BJ (cell line): ENCODE measurements at regions of chr19 and their contacts with region 1.

Region 1: DNA sequence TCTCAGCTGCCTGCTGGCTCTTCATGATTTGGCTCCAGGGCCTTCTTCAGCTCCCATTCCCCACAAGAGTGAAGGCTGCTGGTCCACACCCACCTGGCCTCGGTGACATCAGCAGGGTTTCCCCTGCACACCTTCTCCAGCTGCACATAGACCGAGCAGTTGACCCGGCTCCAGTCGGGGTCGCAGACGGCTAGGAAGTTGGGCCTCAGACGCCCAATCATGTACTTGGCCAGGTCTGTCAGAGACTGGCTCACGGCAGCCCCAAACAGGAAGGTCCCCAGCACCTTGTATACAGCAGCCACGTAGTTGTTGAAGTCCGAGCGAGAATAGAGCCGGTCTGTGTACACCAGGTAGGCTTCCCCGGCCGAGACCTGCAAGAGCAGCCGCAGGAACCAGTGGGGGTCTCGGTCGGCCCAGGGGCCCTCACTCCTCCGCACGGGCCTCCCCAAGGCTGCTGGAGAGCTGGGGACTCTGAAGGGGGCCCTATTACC is 3.8 kb downstream of the PLPP2 start:
- DNase-seq: no peak
- H3K4me3 ChIP-seq: no peak overlapping the region
- H3K27me3 ChIP-seq: no peaks in the 10 kb centered on the region
- CTCF ChIP-seq: no peak

Region 2: DNA sequence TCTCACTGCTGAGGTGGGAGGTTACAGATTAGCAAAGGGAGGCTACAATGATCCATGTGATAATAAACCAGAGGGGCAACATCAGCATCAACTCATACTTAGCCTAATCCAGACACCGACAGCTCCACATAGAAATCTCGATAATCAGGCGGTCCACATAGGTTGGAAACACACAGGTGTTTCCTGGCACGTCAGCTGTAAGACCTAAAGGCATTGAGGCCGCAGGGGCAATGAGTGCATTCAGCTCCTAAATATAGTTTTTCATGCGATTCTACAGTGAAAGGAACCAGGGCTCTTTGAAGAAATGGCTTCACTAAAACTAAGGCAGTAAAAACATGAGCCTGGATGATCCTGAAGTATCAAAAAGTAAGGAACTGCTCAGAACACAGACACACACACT is 15.6 kb before region 1 on chr19:
- CTCF ChIA-PET with region 1: interaction called, 10 read pairs
- POLR2A ChIA-PET with region 1: interaction called, 3 read pairs
- DNase-seq: no peak
- H3K4me3 ChIP-seq: no peak overlapping the region
- H3K27me3 ChIP-seq: peaks cover 2% of the 10 kb centered on the region; the same call in 1 of the 2 replicates
- CTCF ChIP-seq: no peak